ENCODE measurements at regions of chr1 and their contacts with region 1.

Region 1: DNA sequence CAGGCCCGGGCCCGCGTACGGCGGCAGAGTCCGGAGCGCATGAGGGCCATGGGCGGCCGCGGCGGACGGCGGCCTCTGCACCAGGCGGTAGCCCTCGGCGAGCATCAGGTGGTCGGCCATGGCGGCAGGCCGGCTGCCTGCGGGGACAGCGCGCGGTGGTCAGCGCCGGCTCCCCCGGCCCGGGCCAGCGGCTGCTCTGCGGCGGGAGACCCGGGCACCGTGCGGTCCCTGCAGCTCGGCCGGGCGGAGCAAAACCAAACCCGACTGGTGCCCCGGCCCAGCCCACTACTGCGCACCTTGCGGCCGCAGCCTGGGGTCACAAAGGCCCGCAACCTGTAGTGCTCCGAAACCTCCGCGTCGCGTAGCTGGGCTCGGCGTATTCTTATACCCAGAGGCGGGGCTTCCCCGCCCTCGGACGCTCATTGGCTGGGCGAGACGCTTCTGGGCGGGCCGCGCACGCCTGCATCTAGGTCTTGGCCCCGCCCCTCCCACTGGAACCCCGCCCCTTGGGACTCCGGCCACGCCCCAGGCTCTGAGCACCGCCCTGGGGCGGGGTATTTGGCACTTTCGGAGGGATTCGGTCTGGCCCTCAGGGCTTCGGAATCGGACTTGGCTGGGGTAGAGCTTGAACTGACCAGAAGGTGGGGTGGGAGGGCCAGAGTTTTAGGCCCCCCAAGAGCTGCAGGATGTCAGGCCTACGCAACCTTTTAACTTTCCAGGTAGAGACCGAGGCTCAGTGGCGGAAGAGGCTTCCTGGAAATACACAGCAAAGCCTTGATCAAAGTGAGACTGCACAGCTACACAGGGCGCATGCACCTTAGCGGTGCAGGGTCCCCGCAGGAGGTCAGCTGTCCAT is at the start of gene CITED4:
- DNase-seq: peak; percentile 97 to 99 (median 99)
- ATAC-seq: peak; percentile 95
- H3K4me3 ChIP-seq: peak within 1 kb of the TSS; percentile 45
- H3K27ac ChIP-seq: peak within 1 kb of the TSS; percentile 52
- H3K4me1 ChIP-seq: peaks cover 32 to 58% of the 10 kb centered on the region in 2 experiments
- H3K27me3 ChIP-seq: peaks cover 0 to 2% of the 10 kb centered on the region in 2 experiments; a peak in 1 of 5 replicates
- CTCF ChIP-seq: peak; percentile 79 to 95 (median 85)
- EP300 ChIP-seq: peak; percentile 35; the same call in 1 of the 2 replicates
- POLR2A ChIP-seq: peak; percentile 60
- RAD21 ChIP-seq: peak; percentile 87 to 96
- polyA plus RNA-seq, gene CITED4: not detected

Region 2: GRCh38 chr1:40877698-40878097 is 15.5 kb after region 1 on chr1:
- CTCF ChIA-PET with region 1: no interaction called
- POLR2A ChIA-PET with region 1: interaction called, 16 read pairs
- in situ Hi-C with region 1: no loop called
- intact Hi-C with region 1: no loop called
- DNase-seq: peak in 1 of 4 experiments; percentile 41
- ATAC-seq: peak; percentile 24
- H3K4me3 ChIP-seq: no peak overlapping the region
- H3K27ac ChIP-seq: no peak overlapping the region; the same call in 2 of the 3 replicates
- H3K4me1 ChIP-seq: peaks cover 29 to 37% of the 10 kb centered on the region in 2 experiments; a peak in 4 of 5 replicates
- H3K27me3 ChIP-seq: no peaks in the 10 kb centered on the region; a peak in 1 of 5 replicates
- CTCF ChIP-seq: no peak
- EP300 ChIP-seq: no peak
- POLR2A ChIP-seq: no peak
- RAD21 ChIP-seq: no peak

Region 3: DNA sequence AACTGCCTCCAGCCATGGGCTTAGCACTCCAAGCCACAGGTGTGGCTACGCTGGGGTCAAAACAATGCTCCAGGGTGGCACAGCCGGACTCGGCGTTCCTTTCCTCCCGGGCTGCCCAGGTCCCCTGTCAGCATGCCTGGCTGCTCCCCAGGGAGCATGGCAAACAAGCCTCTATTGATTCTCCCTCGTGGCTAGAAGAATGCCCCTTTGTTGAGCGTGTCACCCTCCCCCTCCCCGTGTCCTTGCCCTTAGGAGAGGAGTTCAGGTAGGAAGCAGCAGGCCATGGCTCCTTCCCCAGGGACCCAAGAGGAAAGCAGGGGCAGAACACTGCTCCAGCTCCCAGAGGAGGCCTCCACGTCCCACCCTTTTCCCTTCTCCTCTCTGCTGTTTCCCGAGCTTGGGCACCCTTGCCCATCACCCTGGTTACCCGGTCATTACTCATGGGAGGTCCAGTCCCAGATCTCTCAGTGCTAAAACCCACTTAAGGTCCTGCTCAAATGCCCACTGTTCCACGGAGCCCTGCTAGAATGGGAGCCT is 57.3 kb after region 1 on chr1:
- CTCF ChIA-PET with region 1: no interaction called
- POLR2A ChIA-PET with region 1: interaction called, 3 read pairs
- in situ Hi-C with region 1: no loop called
- intact Hi-C with region 1: loop called (anchors 5 kb)
- DNase-seq: no peak
- ATAC-seq: no peak
- H3K4me3 ChIP-seq: no peak overlapping the region
- H3K27ac ChIP-seq: no peak overlapping the region
- H3K4me1 ChIP-seq: peaks cover 3 to 8% of the 10 kb centered on the region in 2 experiments; a peak in 4 of 5 replicates
- H3K27me3 ChIP-seq: peaks cover 5 to 9% of the 10 kb centered on the region in 2 experiments; a peak in 2 of 5 replicates
- CTCF ChIP-seq: no peak
- EP300 ChIP-seq: no peak
- POLR2A ChIP-seq: no peak
- RAD21 ChIP-seq: no peak

Region 4: GRCh38 chr1:41122851-41123507 is 260.7 kb after region 1 on chr1:
- CTCF ChIA-PET with region 1: no interaction called
- POLR2A ChIA-PET with region 1: no interaction called
- in situ Hi-C with region 1: no loop called
- intact Hi-C with region 1: no loop called
- DNase-seq: peak; percentile 23 to 45 (median 40)
- ATAC-seq: peak; percentile 91
- H3K4me3 ChIP-seq: no peak overlapping the region
- H3K27ac ChIP-seq: no peak overlapping the region
- H3K4me1 ChIP-seq: no peaks in the 10 kb centered on the region; a peak in 1 of 5 replicates
- H3K27me3 ChIP-seq: no peaks in the 10 kb centered on the region
- CTCF ChIP-seq: peak; percentile 27 to 72 (median 65); a peak in 5 of 6 replicates
- EP300 ChIP-seq: no peak
- POLR2A ChIP-seq: no peak
- RAD21 ChIP-seq: peak in 1 of 2 experiments; percentile 69; a peak in 2 of 4 replicates